HEK293 (cell line): ENCODE measurements at regions of chr3 and their contacts with region 1.

Region 1: GRCh38 chr3:66738625-66739365 is 238.0 kb upstream of the LRIG1 start:
- H3K4me3 ChIP-seq: no peak overlapping the region
- H3K27ac ChIP-seq: no peak overlapping the region
- H3K4me1 ChIP-seq: no peaks in the 10 kb centered on the region
- CTCF ChIP-seq: no peak

Region 2: GRCh38 chr3:66762916-66763710 is 24.3 kb after region 1 on chr3:
- CTCF ChIA-PET with region 1: no interaction called
- POLR2A ChIA-PET with region 1: interaction called, 10 read pairs
- H3K4me3 ChIP-seq: no peak overlapping the region
- H3K27ac ChIP-seq: no peak overlapping the region
- H3K4me1 ChIP-seq: no peaks in the 10 kb centered on the region
- CTCF ChIP-seq: no peak